ENCODE measurements at regions of chr15 and their contacts with region 1.

Region 1: DNA sequence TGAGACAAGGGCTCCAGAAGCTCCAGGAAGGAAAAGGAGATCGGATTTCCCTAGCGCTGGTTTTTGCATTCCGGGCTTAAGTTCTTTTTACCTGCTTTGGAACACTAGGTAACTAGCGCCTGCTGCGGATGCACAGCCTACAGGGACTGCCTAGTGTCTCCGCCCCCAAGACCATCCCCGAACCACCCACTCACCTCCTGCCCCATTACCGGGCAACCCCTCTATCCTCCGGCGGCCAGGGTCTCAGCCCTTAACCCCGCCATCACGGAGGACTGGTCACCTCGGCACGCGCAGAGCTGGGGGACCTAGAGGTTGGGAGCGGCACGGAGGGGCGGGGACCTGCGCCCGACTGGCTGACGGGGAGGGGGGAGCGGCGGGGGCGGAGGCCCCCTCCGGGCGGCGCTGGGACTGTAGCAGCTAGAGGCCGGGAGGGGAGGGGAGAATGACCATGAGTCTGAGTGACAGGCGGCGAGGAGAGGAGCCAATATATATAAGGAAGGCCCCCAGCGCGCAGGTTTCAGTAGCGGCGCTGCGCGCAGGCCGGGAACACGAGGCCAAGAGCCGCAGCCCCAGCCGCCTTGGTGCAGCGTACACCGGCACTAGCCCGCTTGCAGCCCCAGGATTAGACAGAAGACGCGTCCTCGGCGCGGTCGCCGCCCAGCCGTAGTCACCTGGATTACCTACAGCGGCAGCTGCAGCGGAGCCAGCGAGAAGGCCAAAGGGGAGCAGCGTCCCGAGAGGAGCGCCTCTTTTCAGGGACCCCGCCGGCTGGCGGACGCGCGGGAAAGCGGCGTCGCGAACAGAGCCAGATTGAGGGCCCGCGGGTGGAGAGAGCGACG is at the start of gene DLL4:
- DNase-seq: peak; percentile 54
- ATAC-seq: peak; percentile 19
- H3K4me3 ChIP-seq: peak within 1 kb of the TSS; percentile 49 to 72 (median 57)
- H3K27ac ChIP-seq: no peak within 1 kb of the TSS
- H3K4me1 ChIP-seq: peaks cover 82% of the 10 kb centered on the region
- H3K27me3 ChIP-seq: peaks cover 9 to 71% of the 10 kb centered on the region in 2 experiments
- CTCF ChIP-seq: no peak
- EP300 ChIP-seq: no peak
- POLR2A ChIP-seq: peak in 1 of 2 experiments; percentile 45; a peak in 1 of 4 replicates
- RAD21 ChIP-seq: no peak
- total RNA-seq, gene DLL4: 0.13 and 0.20 TPM in 2 replicates

Region 2: DNA sequence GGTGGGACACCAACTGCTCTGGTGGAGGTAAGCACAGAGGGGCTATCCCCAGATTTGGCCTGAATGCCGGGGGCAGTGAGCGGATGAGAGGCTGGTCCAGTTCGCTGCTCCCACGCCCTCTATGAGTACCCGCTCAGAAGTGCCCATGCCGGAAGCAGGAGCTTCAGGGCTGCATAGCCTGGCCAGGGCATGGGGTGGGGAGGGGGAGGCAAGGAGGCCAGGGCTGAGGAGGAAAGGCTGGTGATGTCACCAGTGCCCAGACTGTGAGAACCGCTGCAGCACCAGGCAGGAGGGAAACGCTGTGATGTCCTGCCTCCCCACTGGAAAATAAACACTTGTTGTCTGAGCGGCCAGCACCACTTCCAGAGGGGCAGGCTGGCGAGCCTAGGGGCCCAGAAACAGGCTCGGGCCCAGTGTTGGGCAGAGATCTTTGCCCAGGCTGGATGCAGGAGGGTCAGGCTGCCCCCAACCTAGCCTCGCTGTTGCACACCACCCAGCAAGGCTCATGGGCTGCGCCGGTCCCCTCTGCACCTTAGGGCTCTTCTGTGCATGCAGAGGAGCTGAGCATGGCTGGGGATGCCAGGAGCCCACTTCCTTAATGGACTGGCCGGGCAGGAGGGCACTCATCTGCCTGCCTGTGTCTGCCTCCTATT is 10.8 kb before region 1 on chr15:
- CTCF ChIA-PET with region 1: no interaction called
- POLR2A ChIA-PET with region 1: interaction called, 10 read pairs
- in situ Hi-C with region 1: no loop called
- intact Hi-C with region 1: no loop called
- DNase-seq: no peak
- ATAC-seq: peak; percentile 31
- H3K4me3 ChIP-seq: peak overlapping the region; percentile 20 to 71 (median 54)
- H3K27ac ChIP-seq: no peak overlapping the region
- H3K4me1 ChIP-seq: peaks cover 81% of the 10 kb centered on the region
- H3K27me3 ChIP-seq: peaks cover 3 to 36% of the 10 kb centered on the region in 2 experiments; a peak in 3 of 5 replicates
- CTCF ChIP-seq: no peak
- EP300 ChIP-seq: no peak
- POLR2A ChIP-seq: no peak
- RAD21 ChIP-seq: no peak

Region 3: DNA sequence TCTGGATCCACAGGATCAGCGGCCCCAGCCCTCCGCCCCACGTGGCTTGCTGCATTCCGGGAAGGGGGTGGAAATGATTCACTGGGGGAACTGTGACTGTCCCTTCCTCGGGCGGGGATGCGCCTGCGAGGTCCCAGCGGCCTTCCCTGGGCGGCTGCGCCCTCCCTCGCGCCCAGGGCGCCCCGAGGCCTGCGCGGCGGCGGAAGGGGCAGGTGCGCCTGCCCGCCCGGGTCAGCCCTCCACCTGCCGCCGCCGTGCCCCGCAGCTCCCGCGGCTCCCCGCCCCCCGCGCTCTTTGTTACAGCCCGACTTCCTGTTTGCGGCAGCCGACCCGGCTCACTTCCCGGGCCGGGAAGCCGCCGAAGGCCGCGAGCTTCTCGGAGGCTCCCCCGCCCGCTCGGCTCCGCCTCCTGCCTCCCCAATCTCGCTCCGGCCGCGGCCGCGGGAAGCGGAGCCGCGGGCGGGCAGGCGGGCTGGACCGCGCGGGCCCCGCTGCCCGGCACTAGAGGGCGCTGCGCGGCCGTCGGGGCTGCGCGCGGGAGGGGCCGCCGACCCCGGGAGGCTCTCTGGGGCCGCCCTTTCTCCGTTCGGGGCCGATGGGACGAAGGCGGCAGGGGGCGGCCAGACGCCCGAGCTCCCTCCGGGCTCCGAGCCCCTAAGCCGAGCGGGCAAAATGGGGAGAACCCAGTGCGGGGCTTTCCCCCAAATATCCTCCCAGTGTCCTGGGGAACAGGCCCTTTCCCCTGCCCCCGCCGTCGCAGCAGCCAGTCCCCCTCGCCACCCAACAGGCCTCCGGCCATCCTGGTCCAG is 12.7 kb after region 1 on chr15:
- CTCF ChIA-PET with region 1: no interaction called
- POLR2A ChIA-PET with region 1: interaction called, 10 read pairs
- in situ Hi-C with region 1: no loop called
- intact Hi-C with region 1: no loop called
- DNase-seq: peak; percentile 59
- ATAC-seq: peak; percentile 77
- H3K4me3 ChIP-seq: peak overlapping the region; percentile 52 to 78 (median 66)
- H3K27ac ChIP-seq: peak overlapping the region; percentile 51
- H3K4me1 ChIP-seq: peaks cover 58% of the 10 kb centered on the region
- H3K27me3 ChIP-seq: peaks cover 0 to 42% of the 10 kb centered on the region in 2 experiments; a peak in 3 of 5 replicates
- CTCF ChIP-seq: peak; percentile 57
- EP300 ChIP-seq: no peak
- POLR2A ChIP-seq: peak in 1 of 2 experiments; percentile 40; a peak in 2 of 4 replicates
- RAD21 ChIP-seq: peak; percentile 86

Region 4: GRCh38 chr15:41028853-41029252 is 99.8 kb after region 1 on chr15:
- CTCF ChIA-PET with region 1: no interaction called
- POLR2A ChIA-PET with region 1: no interaction called
- in situ Hi-C with region 1: no loop called
- intact Hi-C with region 1: no loop called
- DNase-seq: no peak
- ATAC-seq: no peak
- H3K4me3 ChIP-seq: no peak overlapping the region
- H3K27ac ChIP-seq: no peak overlapping the region
- H3K4me1 ChIP-seq: no peaks in the 10 kb centered on the region
- H3K27me3 ChIP-seq: no peaks in the 10 kb centered on the region
- CTCF ChIP-seq: no peak
- EP300 ChIP-seq: no peak
- POLR2A ChIP-seq: no peak
- RAD21 ChIP-seq: no peak